ENCODE measurements at regions of chr11 and their contacts with region 1.

Region 1: DNA sequence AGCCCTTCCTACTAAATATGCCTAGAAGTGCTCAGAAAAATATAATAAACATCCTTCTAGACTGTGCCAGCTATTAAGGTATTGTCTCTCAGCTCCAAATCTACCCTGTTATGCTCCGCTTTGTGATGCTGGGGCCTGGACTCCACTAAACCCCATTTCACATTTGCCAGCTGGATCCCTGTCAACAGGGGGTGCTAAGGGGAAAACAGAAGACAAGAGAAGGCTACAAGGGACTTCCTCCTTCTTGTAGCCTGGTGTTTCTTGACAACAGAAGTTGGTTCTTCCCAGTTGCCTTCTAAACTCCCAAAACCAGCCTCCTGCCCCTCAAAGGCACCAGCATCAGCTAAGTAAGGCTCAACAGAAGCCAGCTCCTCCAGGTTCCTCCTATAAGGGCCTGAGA is 5.2 kb downstream of the NUMA1 start:
- DNase-seq: peak; percentile 73 to 76 (median 75)
- H3K4me3 ChIP-seq: peak overlapping the region in 5 of 7 experiments; percentile 9 to 65 (median 36)
- H3K27ac ChIP-seq: peak overlapping the region; percentile 50 to 85
- H3K4me1 ChIP-seq: peaks cover 4 to 53% (median 23%) of the 10 kb centered on the region in 4 experiments
- H3K27me3 ChIP-seq: no peaks in the 10 kb centered on the region

Region 2: DNA sequence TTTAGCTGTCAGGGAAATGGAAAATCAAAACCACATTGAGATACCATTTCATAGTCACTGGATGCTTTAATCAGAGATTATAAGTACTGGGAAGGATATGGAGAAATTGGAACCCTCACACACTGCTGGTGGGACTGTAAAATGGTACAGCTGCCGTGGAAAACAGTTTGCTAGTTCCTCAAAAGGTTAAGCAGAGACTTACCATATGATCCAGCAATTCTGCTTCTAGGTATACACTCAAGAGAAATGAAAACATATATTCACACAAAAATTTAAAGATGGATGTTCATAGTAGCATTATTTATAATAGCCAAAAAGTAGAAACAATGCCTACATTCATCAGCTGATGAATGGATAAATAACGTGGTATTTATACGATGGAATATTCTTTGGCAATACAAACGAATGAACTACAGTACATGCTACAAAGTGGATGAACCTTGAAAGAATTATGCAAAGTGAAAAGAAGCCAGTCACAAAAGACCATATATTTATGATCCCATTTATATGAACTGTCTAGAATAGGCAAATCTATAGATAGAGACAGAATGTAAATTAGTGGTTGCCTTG is 123.3 kb before region 1 on chr11:
- CTCF ChIA-PET with region 1: no interaction called
- POLR2A ChIA-PET with region 1: no interaction called
- DNase-seq: no peak
- H3K4me3 ChIP-seq: no peak overlapping the region
- H3K27ac ChIP-seq: no peak overlapping the region
- H3K4me1 ChIP-seq: peaks cover 0 to 16% (median 8%) of the 10 kb centered on the region in 4 experiments
- H3K27me3 ChIP-seq: no peaks in the 10 kb centered on the region

Region 3: GRCh38 chr11:72040726-72041441 is 34.2 kb before region 1 on chr11:
- CTCF ChIA-PET with region 1: interaction called, 14 read pairs
- POLR2A ChIA-PET with region 1: interaction called, 5 read pairs
- DNase-seq: peak; percentile 90 to 94 (median 94)
- H3K4me3 ChIP-seq: peak overlapping the region; percentile 67 to 93 (median 82)
- H3K27ac ChIP-seq: peak overlapping the region; percentile 91 to 95
- H3K4me1 ChIP-seq: peaks cover 19 to 65% (median 50%) of the 10 kb centered on the region in 4 experiments
- H3K27me3 ChIP-seq: no peaks in the 10 kb centered on the region

Region 4: GRCh38 chr11:72085621-72086351 is 10.7 kb after region 1 on chr11:
- CTCF ChIA-PET with region 1: interaction called, 28 read pairs
- POLR2A ChIA-PET with region 1: interaction called, 4 read pairs
- DNase-seq: no peak
- H3K4me3 ChIP-seq: no peak overlapping the region
- H3K27ac ChIP-seq: peak overlapping the region in 1 of 2 experiments; percentile 15
- H3K4me1 ChIP-seq: peaks cover 6 to 23% (median 20%) of the 10 kb centered on the region in 4 experiments
- H3K27me3 ChIP-seq: no peaks in the 10 kb centered on the region

Region 5: GRCh38 chr11:72102946-72103753 is 28.0 kb after region 1 on chr11 and contains the start of gene LAMTOR1:
- CTCF ChIA-PET with region 1: interaction called, 10 read pairs
- POLR2A ChIA-PET with region 1: interaction called, 5 read pairs
- DNase-seq: peak; percentile 99 to 100 (median 100)
- H3K4me3 ChIP-seq: peak within 1 kb of the TSS; percentile 72 to 94 (median 87)
- H3K27ac ChIP-seq: peak within 1 kb of the TSS; percentile 95 to 96
- H3K4me1 ChIP-seq: peaks cover 36 to 54% (median 51%) of the 10 kb centered on the region in 4 experiments
- H3K27me3 ChIP-seq: no peaks in the 10 kb centered on the region

Region 6: GRCh38 chr11:72541257-72541974 is 466.3 kb after region 1 on chr11:
- CTCF ChIA-PET with region 1: no interaction called
- POLR2A ChIA-PET with region 1: no interaction called
- DNase-seq: no peak
- H3K4me3 ChIP-seq: no peak overlapping the region
- H3K27ac ChIP-seq: no peak overlapping the region
- H3K4me1 ChIP-seq: no peaks in the 10 kb centered on the region
- H3K27me3 ChIP-seq: peaks cover 0 to 5% (median 2%) of the 10 kb centered on the region in 5 experiments